Naive thymus-derived CD4-positive, alpha-beta T cell (primary cell): ENCODE measurements at regions of chr14 and their contacts with region 1.

Region 1: DNA sequence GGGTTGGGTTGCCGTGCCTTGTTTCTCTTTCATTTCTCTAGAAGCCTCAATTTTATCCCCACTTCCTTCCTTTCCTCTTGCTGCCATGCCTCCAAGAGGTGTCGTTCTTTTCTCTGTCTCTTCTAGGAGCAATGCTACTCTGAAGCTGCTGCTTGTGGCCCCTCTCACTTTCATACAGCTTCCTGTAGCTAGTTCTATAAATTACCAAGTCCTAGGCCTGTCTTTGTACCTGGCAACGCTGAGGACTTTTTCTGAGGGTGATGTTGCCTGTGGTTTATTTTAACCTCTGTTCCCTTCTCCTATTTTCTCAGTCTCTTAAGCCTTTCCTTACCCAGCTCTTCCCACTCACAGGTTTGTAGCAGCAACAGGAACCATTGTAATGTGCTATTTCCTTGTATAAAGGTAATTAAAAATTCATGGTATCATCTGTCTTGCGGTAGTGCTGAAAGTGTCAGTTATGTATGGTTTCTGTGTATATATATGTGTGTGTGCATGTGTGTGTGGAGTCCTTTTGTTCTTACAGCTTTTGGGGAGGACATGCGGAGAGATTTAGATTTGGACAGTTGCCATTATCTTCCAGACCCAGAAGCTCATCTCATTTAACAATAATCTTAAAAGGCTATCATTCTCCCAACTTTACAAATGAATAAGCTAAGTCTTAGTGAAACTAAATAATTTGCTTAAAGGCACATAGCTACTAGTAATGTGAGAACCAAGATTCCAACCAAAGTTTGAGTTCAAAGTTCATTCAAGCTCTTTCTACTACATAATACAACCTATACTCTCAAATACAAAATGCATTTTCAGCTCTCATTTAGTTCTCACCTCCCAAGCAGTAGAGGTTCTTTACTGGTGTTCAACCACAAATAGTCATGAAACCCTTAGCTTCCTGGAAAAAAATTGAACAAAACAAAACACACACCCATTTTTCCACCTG is 43.8 kb downstream of the DDHD1 start:
- DNase-seq: peak in 8 of 9 donors; percentile 37 to 62 (median 57)
- ATAC-seq: peak; percentile 85
- H3K4me3 ChIP-seq: peak overlapping the region; percentile 70
- H3K4me3 Mint-ChIP-seq: no peak overlapping the region
- H3K27ac ChIP-seq: peak overlapping the region; percentile 67
- H3K27ac Mint-ChIP-seq: no peak overlapping the region
- H3K4me1 ChIP-seq: peaks cover 28 to 29% of the 10 kb centered on the region in 2 donors
- H3K4me1 Mint-ChIP-seq: peaks cover 10 to 46% (median 16%) of the 10 kb centered on the region in 7 donors
- H3K27me3 ChIP-seq: no peaks in the 10 kb centered on the region
- H3K27me3 Mint-ChIP-seq: no peaks in the 10 kb centered on the region

Region 2: DNA sequence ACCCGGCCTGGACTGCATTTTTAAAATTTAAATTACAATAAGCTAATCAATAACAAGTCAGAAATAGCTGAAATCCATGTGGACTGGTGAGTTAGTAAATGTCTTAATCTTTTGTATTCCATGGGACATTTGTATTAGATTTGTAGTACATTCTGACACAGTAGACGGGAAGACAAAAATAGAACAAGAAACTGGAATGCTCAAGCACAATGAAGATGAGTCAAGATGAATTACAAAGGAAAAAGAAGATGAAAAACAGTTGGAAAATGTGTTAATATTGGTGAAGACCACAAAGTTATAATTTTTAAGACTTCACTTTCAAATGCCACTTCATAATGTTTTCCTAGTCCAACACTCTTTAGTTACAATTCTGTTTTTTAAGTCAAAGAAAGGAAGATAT is 60.7 kb before region 1 on chr14:
- CTCF ChIA-PET with region 1: no interaction called
- POLR2A ChIA-PET with region 1: no interaction called
- intact Hi-C with region 1: no loop called
- DNase-seq: no peak
- ATAC-seq: no peak
- H3K4me3 ChIP-seq: no peak overlapping the region
- H3K4me3 Mint-ChIP-seq: no peak overlapping the region
- H3K27ac ChIP-seq: no peak overlapping the region
- H3K27ac Mint-ChIP-seq: no peak overlapping the region
- H3K4me1 ChIP-seq: no peaks in the 10 kb centered on the region
- H3K4me1 Mint-ChIP-seq: no peaks in the 10 kb centered on the region
- H3K27me3 ChIP-seq: no peaks in the 10 kb centered on the region
- H3K27me3 Mint-ChIP-seq: no peaks in the 10 kb centered on the region

Region 3: GRCh38 chr14:53126731-53127130 is 17.4 kb after region 1 on chr14:
- CTCF ChIA-PET with region 1: interaction called, 8 read pairs
- POLR2A ChIA-PET with region 1: interaction called, 3 read pairs
- intact Hi-C with region 1: loop called (anchors 1 to 2 kb)
- DNase-seq: no peak
- ATAC-seq: no peak
- H3K4me3 ChIP-seq: peak overlapping the region; percentile 4
- H3K4me3 Mint-ChIP-seq: peak overlapping the region; percentile 39 to 88 (median 76)
- H3K27ac ChIP-seq: peak overlapping the region; percentile 9
- H3K27ac Mint-ChIP-seq: peak overlapping the region in 8 of 9 donors; percentile 45 to 87 (median 80)
- H3K4me1 ChIP-seq: peaks cover 3 to 16% of the 10 kb centered on the region in 2 donors
- H3K4me1 Mint-ChIP-seq: peaks cover 10 to 37% (median 18%) of the 10 kb centered on the region in 7 donors
- H3K27me3 ChIP-seq: no peaks in the 10 kb centered on the region
- H3K27me3 Mint-ChIP-seq: no peaks in the 10 kb centered on the region

Region 4: DNA sequence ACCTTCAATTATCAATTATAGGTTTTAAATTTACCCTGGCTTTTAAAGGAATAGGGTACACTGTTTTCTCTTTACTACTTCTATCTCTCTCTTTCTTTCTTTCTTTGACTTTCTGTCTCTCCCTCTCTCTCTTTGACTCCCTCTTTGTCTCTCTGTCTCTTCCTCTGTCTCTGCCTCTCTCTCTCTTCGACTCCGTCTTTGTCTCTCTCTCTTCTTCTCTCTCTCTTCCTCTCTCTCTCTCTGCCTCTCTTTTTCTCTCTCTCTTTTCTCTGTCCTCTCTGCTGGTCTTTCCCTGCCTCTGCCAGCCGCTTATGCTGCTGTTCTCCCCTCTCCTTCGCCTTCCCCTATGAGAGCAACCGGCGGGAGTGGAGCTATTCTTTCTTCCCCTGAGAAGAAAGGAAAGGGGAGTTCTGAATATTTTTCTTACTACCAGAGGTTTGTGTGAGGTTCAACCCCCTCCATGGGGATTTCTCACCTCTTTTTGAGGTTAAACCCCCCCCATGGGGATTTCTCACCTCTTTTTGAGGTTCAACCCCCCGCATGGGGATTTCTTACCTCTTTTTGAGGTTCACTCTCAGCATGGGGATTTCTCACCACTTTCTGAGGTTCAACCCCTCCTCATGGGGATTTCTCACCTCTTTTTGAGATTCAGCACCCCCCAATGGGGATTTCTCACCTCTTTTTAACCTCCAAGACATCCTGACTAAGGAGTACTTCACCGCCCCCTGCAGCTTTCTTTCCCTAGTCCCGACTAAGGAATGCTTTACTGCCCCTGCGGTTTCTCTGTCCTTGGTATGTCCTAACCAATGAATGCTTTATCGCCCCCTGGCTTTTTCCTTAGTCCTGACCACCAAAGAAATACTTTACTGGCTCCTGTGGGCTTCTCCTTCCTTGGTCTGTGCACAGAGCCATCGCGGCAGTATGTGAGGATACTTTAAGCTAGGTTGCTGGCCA is 71.2 kb after region 1 on chr14:
- CTCF ChIA-PET with region 1: no interaction called
- POLR2A ChIA-PET with region 1: no interaction called
- intact Hi-C with region 1: loop called in 1 of 2 experiments (anchors 2 kb)
- DNase-seq: peak in 3 of 9 donors; percentile 16 to 52 (median 35)
- ATAC-seq: peak; percentile 79
- H3K4me3 ChIP-seq: no peak overlapping the region
- H3K4me3 Mint-ChIP-seq: peak overlapping the region in 2 of 10 donors; percentile 0 to 16
- H3K27ac ChIP-seq: no peak overlapping the region
- H3K27ac Mint-ChIP-seq: peak overlapping the region in 2 of 9 donors; percentile 25 to 86
- H3K4me1 ChIP-seq: no peaks in the 10 kb centered on the region
- H3K4me1 Mint-ChIP-seq: peaks cover 0 to 23% (median 5%) of the 10 kb centered on the region in 7 donors
- H3K27me3 ChIP-seq: no peaks in the 10 kb centered on the region
- H3K27me3 Mint-ChIP-seq: peaks cover 0 to 6% (median 0%) of the 10 kb centered on the region in 5 donors

Region 5: GRCh38 chr14:53217295-53217994 is 108.1 kb after region 1 on chr14:
- CTCF ChIA-PET with region 1: no interaction called
- POLR2A ChIA-PET with region 1: no interaction called
- intact Hi-C with region 1: loop called (anchors 2 kb)
- DNase-seq: peak; percentile 51 to 85 (median 67)
- ATAC-seq: peak; percentile 96
- H3K4me3 ChIP-seq: peak overlapping the region; percentile 72
- H3K4me3 Mint-ChIP-seq: peak overlapping the region; percentile 70 to 94 (median 90)
- H3K27ac ChIP-seq: peak overlapping the region; percentile 56
- H3K27ac Mint-ChIP-seq: peak overlapping the region in 8 of 9 donors; percentile 46 to 90 (median 76)
- H3K4me1 ChIP-seq: peaks cover 5 to 6% of the 10 kb centered on the region in 2 donors
- H3K4me1 Mint-ChIP-seq: peaks cover 5 to 20% (median 12%) of the 10 kb centered on the region in 7 donors
- H3K27me3 ChIP-seq: no peaks in the 10 kb centered on the region
- H3K27me3 Mint-ChIP-seq: peaks cover 0 to 2% (median 0%) of the 10 kb centered on the region in 5 donors

Region 6: DNA sequence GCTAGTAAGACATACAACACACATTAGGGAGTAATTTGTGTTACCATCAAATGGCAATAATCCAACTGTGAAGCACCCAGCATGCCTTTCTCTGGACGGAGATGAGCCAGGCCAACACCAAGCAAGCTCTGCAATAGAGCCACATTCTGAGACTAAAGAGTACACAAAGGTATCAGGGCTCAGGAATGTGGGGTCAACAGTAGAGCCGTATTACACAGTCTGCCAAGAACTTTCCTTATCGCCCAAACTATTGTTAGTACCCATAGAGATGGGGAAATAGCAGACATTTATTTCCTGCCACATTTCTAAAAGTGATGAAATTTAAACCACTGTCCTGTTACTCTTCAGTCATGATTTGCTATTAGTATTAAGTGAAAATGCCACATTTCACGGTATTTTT is 733.6 kb after region 1 on chr14:
- CTCF ChIA-PET with region 1: no interaction called
- POLR2A ChIA-PET with region 1: no interaction called
- intact Hi-C with region 1: no loop called
- DNase-seq: no peak
- ATAC-seq: no peak
- H3K4me3 ChIP-seq: no peak overlapping the region
- H3K4me3 Mint-ChIP-seq: no peak overlapping the region
- H3K27ac ChIP-seq: no peak overlapping the region
- H3K27ac Mint-ChIP-seq: no peak overlapping the region
- H3K4me1 ChIP-seq: no peaks in the 10 kb centered on the region
- H3K4me1 Mint-ChIP-seq: no peaks in the 10 kb centered on the region
- H3K27me3 ChIP-seq: no peaks in the 10 kb centered on the region
- H3K27me3 Mint-ChIP-seq: peaks cover 0 to 16% (median 0%) of the 10 kb centered on the region in 5 donors